AG04450 (cell line): ENCODE measurements at regions of chr4 and their contacts with region 1.

Region 1: DNA sequence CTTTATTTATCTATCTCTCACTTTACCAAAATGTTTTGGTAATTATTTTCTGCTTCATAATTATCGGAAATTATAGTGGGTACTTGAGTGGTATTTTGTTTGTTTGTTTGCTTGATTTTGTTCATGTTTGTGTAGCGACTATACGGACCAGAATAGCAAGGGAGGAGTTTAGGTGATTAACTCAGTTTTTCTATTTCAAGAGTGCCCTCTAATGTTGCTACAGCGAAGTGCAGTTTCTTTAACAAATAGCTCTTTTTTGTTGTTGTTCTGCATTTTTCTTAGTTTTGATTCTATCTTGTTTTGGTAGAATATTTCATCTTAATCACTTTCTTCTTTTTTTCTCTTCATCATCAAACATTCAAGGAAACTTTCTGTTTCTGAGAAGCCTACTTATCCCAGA is 40.8 kb upstream of the QRFPR start:
- DNase-seq: no peak
- H3K4me3 ChIP-seq: no peak overlapping the region
- H3K27ac ChIP-seq: no peak overlapping the region
- H3K27me3 ChIP-seq: no peaks in the 10 kb centered on the region
- CTCF ChIP-seq: 0 out of 2 replicates have a peak, but pooled peaks have one; percentile 5

Region 2: DNA sequence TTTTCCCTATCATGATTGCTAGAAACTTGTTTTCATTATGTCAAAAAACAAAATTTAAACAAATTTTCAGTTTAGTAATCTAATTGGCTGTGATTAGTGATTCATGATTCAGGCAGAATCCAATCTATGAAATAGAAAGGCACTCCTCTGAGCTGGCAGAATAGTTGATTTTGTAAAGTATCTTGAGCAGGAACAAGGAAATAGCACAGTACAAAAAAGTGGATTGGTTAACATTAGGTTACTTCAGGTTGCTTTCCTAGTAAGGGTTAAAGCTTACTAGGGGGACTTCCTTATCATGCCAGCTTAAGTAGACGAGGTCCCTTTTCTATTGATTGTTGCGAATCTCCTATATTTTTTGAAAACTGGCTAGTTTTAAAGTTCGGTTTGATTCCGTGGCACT is 455.7 kb before region 1 on chr4:
- CTCF ChIA-PET with region 1: no interaction called
- POLR2A ChIA-PET with region 1: no interaction called
- DNase-seq: no peak
- H3K4me3 ChIP-seq: no peak overlapping the region
- H3K27ac ChIP-seq: no peak overlapping the region
- H3K27me3 ChIP-seq: no peaks in the 10 kb centered on the region
- CTCF ChIP-seq: no peak

Region 3: GRCh38 chr4:121454251-121454979 is 32.8 kb after region 1 on chr4:
- CTCF ChIA-PET with region 1: no interaction called
- POLR2A ChIA-PET with region 1: no interaction called
- DNase-seq: no peak
- H3K4me3 ChIP-seq: no peak overlapping the region
- H3K27ac ChIP-seq: no peak overlapping the region
- H3K27me3 ChIP-seq: peaks cover 2% of the 10 kb centered on the region
- CTCF ChIP-seq: no peak

Region 4: GRCh38 chr4:121819216-121819980 is 397.8 kb after region 1 on chr4:
- CTCF ChIA-PET with region 1: interaction called, 11 read pairs
- POLR2A ChIA-PET with region 1: no interaction called
- DNase-seq: no peak
- H3K4me3 ChIP-seq: no peak overlapping the region
- H3K27ac ChIP-seq: no peak overlapping the region
- H3K27me3 ChIP-seq: no peaks in the 10 kb centered on the region
- CTCF ChIP-seq: no peak